ENCODE measurements at regions of chr11 and their contacts with region 1.

Region 1: GRCh38 chr11:62665075-62665598 is at the starts of genes C11orf98 and CSKMT:
- DNase-seq: peak; percentile 96
- CTCF ChIP-seq: no peak

Region 2: GRCh38 chr11:62601394-62602140 is 63.6 kb before region 1 on chr11 and contains the start of gene MTA2:
- CTCF ChIA-PET with region 1: no interaction called
- POLR2A ChIA-PET with region 1: interaction called, 21 read pairs
- DNase-seq: peak; percentile 98
- CTCF ChIP-seq: peak; percentile 16

Region 3: DNA sequence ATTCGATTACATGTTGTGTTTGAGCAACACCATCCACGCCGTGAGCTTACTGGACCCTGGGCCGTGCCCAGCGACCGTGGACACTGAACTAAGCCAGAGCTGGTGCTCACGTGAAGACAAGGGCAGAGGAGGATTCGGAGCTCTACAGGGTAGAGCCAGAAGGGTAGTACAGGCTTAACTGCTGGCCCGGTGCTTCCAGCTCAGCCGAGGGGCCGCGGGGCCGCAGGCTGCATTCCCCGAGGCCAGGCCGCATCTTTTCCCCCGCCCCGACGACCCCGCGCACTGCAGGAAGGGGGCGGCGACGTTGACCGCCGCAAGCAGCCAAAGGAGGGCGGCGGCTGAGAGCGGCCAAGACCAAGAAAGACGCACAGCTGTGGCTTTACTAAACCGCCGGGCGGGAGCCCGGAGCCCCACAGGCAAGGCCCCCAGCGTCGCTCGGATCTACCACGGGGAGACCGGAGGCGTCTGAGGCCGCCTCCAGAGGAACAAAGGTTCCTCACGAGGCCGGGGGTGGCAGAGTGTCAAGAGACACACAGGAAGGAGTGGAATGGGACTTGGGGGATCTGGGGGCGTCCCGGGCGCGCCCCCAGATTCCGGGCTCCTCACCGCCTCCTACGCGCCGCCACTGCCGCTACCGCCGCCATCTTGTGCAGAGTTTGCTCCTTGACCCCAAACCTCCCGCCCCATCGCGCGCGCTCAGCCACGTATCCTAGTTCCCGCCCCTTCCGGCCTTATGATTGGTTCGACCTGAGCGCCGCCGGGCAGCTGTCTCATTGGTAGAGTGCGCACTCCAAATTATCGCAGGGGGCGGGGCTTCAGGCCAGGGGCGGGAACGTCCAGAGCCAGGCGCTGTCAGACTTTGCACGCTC is 18.9 kb before region 1 on chr11 and contains the start of gene GANAB:
- CTCF ChIA-PET with region 1: interaction called, 6 read pairs
- POLR2A ChIA-PET with region 1: interaction called, 37 read pairs
- DNase-seq: peak; percentile 100
- CTCF ChIP-seq: no peak

Region 4: GRCh38 chr11:62678770-62679696 is 13.9 kb after region 1 on chr11 and contains the start of gene UBXN1:
- CTCF ChIA-PET with region 1: interaction called, 12 read pairs
- POLR2A ChIA-PET with region 1: interaction called, 95 read pairs
- DNase-seq: peak; percentile 93
- CTCF ChIP-seq: no peak

Region 5: GRCh38 chr11:62726915-62727763 is 62.0 kb after region 1 on chr11 and contains the start of gene HNRNPUL2:
- CTCF ChIA-PET with region 1: no interaction called
- POLR2A ChIA-PET with region 1: interaction called, 16 read pairs
- DNase-seq: peak; percentile 98
- CTCF ChIP-seq: no peak

Region 6: DNA sequence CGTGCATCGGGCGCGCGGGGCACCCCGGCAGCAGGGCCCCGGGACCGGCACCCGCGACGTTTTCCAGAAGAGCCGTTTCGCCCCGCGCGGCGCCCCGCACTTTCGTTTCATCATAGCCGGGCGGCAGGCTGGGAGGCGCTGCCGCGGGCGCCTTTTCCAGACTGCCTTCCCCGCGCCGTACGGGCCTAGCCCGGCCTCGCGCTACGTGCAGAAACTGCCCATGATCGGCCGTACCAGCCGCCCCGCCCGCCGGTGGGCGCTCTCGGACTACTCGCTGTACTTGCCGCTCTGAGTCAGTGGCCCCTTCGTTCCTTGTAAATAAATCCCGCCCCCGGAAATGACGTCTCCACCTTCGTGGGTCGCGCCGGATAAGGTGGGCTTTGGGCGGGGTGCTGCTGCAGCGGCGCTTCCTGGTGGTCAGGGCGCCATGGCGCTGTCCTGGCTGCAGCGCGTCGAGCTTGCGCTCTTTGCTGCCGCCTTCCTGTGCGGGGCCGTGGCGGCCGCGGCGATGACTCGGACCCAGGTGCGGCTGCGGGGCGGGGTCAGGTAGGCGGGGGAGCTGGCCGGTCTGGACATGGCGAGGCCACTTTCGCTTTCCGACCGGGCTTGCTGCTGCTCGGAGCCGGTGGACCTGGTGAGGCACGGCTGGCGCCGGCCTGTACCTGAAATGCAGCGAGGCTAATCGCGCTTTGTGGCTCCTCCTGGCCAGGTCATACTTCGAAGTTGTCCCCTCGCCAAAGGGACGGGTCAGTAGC is 122.0 kb after region 1 on chr11 and contains the start of gene TMEM179B:
- CTCF ChIA-PET with region 1: interaction called, 9 read pairs
- POLR2A ChIA-PET with region 1: interaction called, 13 read pairs
- DNase-seq: peak; percentile 96
- CTCF ChIP-seq: peak; percentile 65

Region 7: DNA sequence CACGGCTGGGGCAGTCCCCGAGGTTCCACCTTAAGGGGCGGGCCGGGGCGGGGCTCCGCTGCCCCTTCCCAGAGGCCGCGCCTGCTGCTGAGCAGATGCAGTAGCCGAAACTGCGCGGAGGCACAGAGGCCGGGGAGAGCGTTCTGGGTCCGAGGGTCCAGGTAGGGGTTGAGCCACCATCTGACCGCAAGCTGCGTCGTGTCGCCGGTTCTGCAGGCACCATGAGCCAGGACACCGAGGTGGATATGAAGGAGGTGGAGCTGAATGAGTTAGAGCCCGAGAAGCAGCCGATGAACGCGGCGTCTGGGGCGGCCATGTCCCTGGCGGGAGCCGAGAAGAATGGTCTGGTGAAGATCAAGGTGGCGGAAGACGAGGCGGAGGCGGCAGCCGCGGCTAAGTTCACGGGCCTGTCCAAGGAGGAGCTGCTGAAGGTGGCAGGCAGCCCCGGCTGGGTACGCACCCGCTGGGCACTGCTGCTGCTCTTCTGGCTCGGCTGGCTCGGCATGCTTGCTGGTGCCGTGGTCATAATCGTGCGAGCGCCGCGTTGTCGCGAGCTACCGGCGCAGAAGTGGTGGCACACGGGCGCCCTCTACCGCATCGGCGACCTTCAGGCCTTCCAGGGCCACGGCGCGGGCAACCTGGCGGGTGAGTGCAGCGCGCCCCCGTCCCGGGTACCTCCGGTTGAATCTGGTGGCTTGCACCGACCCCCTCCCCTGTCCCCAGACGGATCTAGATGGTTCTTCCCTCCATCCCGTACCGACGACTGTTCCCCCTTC is 215.9 kb after region 1 on chr11 and contains the start of gene SLC3A2:
- CTCF ChIA-PET with region 1: interaction called, 3 read pairs
- POLR2A ChIA-PET with region 1: interaction called, 12 read pairs
- DNase-seq: peak; percentile 91
- CTCF ChIP-seq: peak; percentile 80

Measured in GM10248 (cell line).